Natural killer cell (primary cell): ENCODE measurements at regions of chr9 and their contacts with region 1.

Region 1: GRCh38 chr9:99162759-99163364 is 57.9 kb downstream of the TGFBR1 start:
- DNase-seq: peak in 1 of 2 donors; percentile 70
- ATAC-seq: peak; percentile 45 to 56 (median 53)
- H3K4me3 ChIP-seq: no peak overlapping the region
- H3K4me3 Mint-ChIP-seq: no peak overlapping the region
- H3K27ac ChIP-seq: no peak overlapping the region
- H3K27ac Mint-ChIP-seq: no peak overlapping the region
- H3K4me1 ChIP-seq: peaks cover 3% of the 10 kb centered on the region
- H3K4me1 Mint-ChIP-seq: peaks cover 11 to 18% of the 10 kb centered on the region in 2 donors
- H3K27me3 ChIP-seq: no peaks in the 10 kb centered on the region
- H3K27me3 Mint-ChIP-seq: no peaks in the 10 kb centered on the region
- CTCF ChIP-seq: peak; percentile 62

Region 2: DNA sequence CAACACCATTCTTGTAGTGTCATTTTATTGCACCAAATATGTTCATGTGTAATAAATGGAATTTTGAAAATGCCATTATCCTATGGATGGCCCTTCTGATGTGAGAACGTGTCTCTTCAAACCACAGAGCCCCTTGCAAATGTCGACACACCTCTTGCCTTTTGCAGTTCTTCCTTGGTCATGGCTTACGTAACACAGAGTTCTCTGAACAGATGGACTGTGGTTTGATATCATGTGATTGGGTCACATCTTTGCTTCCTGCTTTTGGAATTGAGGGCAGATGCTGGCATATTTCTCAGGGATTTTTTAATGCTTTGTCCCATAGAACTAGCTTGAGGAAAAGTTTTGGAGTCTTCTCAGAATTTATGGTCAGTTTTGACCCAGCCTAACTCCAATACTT is 53.3 kb before region 1 on chr9:
- intact Hi-C with region 1: no loop called
- DNase-seq: peak in 1 of 2 donors; percentile 39
- ATAC-seq: no peak
- H3K4me3 ChIP-seq: no peak overlapping the region
- H3K4me3 Mint-ChIP-seq: peak overlapping the region; percentile 89
- H3K27ac ChIP-seq: peak overlapping the region; percentile 54
- H3K27ac Mint-ChIP-seq: peak overlapping the region; percentile 76 to 81
- H3K4me1 ChIP-seq: peaks cover 29% of the 10 kb centered on the region
- H3K4me1 Mint-ChIP-seq: peaks cover 82 to 85% of the 10 kb centered on the region in 2 donors
- H3K27me3 ChIP-seq: no peaks in the 10 kb centered on the region
- H3K27me3 Mint-ChIP-seq: no peaks in the 10 kb centered on the region
- CTCF ChIP-seq: no peak

Region 3: GRCh38 chr9:99184475-99185347 is 21.8 kb after region 1 on chr9:
- intact Hi-C with region 1: loop called (anchors 1 kb)
- DNase-seq: peak; percentile 70 to 91
- ATAC-seq: peak; percentile 87 to 92 (median 90)
- H3K4me3 ChIP-seq: no peak overlapping the region
- H3K4me3 Mint-ChIP-seq: peak overlapping the region; percentile 57
- H3K27ac ChIP-seq: peak overlapping the region; percentile 27
- H3K27ac Mint-ChIP-seq: peak overlapping the region; percentile 34 to 72
- H3K4me1 ChIP-seq: peaks cover 27% of the 10 kb centered on the region
- H3K4me1 Mint-ChIP-seq: peaks cover 17 to 22% of the 10 kb centered on the region in 2 donors
- H3K27me3 ChIP-seq: no peaks in the 10 kb centered on the region
- H3K27me3 Mint-ChIP-seq: peaks cover 12 to 15% of the 10 kb centered on the region in 2 donors
- CTCF ChIP-seq: peak; percentile 88